ENCODE measurements at regions of chr3 and their contacts with region 1.

Region 1: DNA sequence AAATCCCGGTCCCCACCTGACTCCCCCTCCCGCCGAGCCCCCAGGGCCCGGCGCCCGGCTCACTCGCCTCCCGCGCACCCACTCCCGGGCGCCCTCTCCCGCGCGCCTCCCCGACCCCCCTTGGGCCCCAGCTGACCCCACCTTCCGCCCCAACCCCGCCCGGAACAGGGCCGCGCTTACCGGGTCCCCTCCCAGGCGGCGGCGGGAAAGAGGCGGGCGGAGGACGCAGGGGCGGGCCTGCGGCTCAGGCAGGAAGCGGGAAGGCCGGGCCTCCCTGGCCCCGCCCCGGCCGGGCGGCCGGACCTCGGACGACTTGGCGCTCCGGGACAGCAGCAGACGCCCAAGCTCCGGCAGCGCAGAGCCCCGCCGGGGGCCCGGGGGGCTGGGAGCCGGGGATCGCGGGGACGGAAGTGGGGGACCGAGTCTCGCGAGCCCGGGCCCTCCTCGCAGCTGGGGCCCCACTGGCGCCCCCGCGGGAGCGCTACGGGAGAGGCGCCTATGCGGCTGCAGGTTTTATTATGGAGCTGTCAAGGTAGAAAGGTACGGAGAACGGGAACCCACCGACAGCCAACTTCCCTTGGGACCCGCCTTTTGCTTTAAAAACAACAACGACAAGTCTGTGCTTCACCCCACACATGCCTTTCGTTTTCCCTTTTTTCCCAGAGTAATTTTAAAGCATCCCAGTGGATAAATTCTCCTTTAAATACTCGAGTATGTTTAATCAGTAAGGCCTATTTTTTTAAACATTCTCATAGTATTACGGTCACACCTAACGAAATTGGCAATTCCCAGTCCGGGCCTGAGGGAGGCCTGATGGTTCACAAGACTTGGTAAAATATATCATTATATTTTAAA is at the start of gene SLC41A3:
- H3K4me3 Mint-ChIP-seq: peak within 1 kb of the TSS; percentile 84
- H3K27ac Mint-ChIP-seq: peak within 1 kb of the TSS; percentile 68
- H3K4me1 Mint-ChIP-seq: peaks cover 7% of the 10 kb centered on the region
- H3K27me3 Mint-ChIP-seq: peaks cover 8% of the 10 kb centered on the region

Region 2: GRCh38 chr3:125990253-125990970 is 93.7 kb before region 1 on chr3:
- intact Hi-C with region 1: loop called (anchors 10 kb)
- H3K4me3 Mint-ChIP-seq: peak overlapping the region; percentile 93
- H3K27ac Mint-ChIP-seq: peak overlapping the region; percentile 86
- H3K4me1 Mint-ChIP-seq: peaks cover 9% of the 10 kb centered on the region
- H3K27me3 Mint-ChIP-seq: peaks cover 18% of the 10 kb centered on the region

Region 3: DNA sequence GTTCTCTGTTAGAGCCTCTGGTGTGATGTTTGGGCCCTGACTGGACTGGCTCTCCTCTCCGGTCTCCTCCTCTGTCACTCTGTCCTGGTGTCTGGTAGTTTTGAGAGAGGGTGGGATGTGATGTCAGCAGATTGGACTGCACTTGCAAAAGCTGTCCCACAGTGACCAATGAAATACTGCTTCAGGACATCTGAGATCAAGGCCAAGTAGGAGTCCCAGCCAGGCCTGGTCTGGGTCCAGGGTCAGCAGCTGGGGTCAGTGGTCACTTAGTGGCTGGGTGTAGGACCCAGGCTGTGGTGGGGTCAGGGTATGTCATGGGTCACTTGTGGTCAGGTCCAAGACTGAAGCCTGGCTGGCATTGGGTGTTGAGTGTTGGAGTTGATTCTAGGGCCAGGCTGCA is 75.3 kb after region 1 on chr3:
- intact Hi-C with region 1: no loop called
- H3K4me3 Mint-ChIP-seq: no peak overlapping the region
- H3K27ac Mint-ChIP-seq: no peak overlapping the region
- H3K4me1 Mint-ChIP-seq: no peaks in the 10 kb centered on the region
- H3K27me3 Mint-ChIP-seq: peaks cover 6% of the 10 kb centered on the region

Region 4: GRCh38 chr3:126212602-126213378 is 128.7 kb after region 1 on chr3:
- intact Hi-C with region 1: no loop called
- H3K4me3 Mint-ChIP-seq: no peak overlapping the region
- H3K27ac Mint-ChIP-seq: no peak overlapping the region
- H3K4me1 Mint-ChIP-seq: peaks cover 16% of the 10 kb centered on the region
- H3K27me3 Mint-ChIP-seq: peaks cover 74% of the 10 kb centered on the region